CD4-positive, alpha-beta memory T cell (primary cell): ENCODE measurements at regions of chr17 and their contacts with region 1.

Region 1: GRCh38 chr17:38868817-38869525 is 887 bp upstream of the LASP1 start:
- DNase-seq: peak; percentile 85 to 91 (median 87)
- H3K4me3 ChIP-seq: peak overlapping the region; percentile 66 to 99
- H3K4me3 Mint-ChIP-seq: peak overlapping the region; percentile 93 to 100 (median 96)
- H3K27ac ChIP-seq: peak overlapping the region; percentile 88
- H3K27ac Mint-ChIP-seq: peak overlapping the region; percentile 96 to 100 (median 97)
- H3K4me1 ChIP-seq: peaks cover 45% of the 10 kb centered on the region
- H3K4me1 Mint-ChIP-seq: peaks cover 35 to 63% (median 44%) of the 10 kb centered on the region in 4 donors
- H3K27me3 ChIP-seq: no peaks in the 10 kb centered on the region
- H3K27me3 Mint-ChIP-seq: peaks cover 0 to 7% of the 10 kb centered on the region in 2 donors

Region 2: GRCh38 chr17:38711792-38712571 is 157.0 kb before region 1 on chr17:
- CTCF ChIA-PET with region 1: no interaction called
- POLR2A ChIA-PET with region 1: no interaction called
- intact Hi-C with region 1: no loop called
- DNase-seq: no peak
- H3K4me3 ChIP-seq: no peak overlapping the region
- H3K4me3 Mint-ChIP-seq: no peak overlapping the region
- H3K27ac ChIP-seq: no peak overlapping the region
- H3K27ac Mint-ChIP-seq: peak overlapping the region in 4 of 7 donors; percentile 24 to 64 (median 34)
- H3K4me1 ChIP-seq: peaks cover 37% of the 10 kb centered on the region
- H3K4me1 Mint-ChIP-seq: peaks cover 19 to 65% (median 29%) of the 10 kb centered on the region in 4 donors
- H3K27me3 ChIP-seq: no peaks in the 10 kb centered on the region
- H3K27me3 Mint-ChIP-seq: no peaks in the 10 kb centered on the region

Region 3: DNA sequence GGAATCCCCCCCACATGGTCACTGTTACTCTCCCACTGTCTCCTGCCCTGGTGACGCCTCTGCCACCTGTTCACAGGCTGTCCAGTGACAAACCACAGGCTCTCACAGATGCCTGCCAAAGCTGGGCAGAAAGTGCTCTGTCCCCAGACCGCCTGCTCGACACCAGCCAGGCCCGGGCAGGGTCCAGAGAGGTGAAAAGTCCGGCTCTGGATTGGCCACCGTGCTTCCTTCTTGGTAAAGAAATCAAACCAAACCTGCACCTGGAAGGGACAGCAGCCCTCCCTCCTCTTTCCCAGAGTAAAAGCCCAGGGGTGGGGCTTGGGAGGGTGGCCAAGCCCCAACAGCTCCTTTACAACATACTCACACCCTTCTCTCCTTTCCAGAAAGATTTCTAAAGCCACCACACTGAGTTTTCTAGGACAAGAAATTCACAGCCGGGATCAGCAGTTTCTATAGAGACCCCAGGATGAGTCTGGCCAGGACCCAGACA is 127.0 kb before region 1 on chr17:
- CTCF ChIA-PET with region 1: no interaction called
- POLR2A ChIA-PET with region 1: no interaction called
- intact Hi-C with region 1: no loop called
- DNase-seq: no peak
- H3K4me3 ChIP-seq: no peak overlapping the region
- H3K4me3 Mint-ChIP-seq: no peak overlapping the region
- H3K27ac ChIP-seq: no peak overlapping the region
- H3K27ac Mint-ChIP-seq: peak overlapping the region in 1 of 7 donors; percentile 13
- H3K4me1 ChIP-seq: peaks cover 4% of the 10 kb centered on the region
- H3K4me1 Mint-ChIP-seq: peaks cover 2 to 8% (median 5%) of the 10 kb centered on the region in 4 donors
- H3K27me3 ChIP-seq: peaks cover 9% of the 10 kb centered on the region
- H3K27me3 Mint-ChIP-seq: peaks cover 14 to 18% of the 10 kb centered on the region in 2 donors

Region 4: GRCh38 chr17:38752119-38752929 is 116.6 kb before region 1 on chr17 and contains the start of gene PSMB3:
- CTCF ChIA-PET with region 1: no interaction called
- POLR2A ChIA-PET with region 1: interaction called, 14 read pairs
- intact Hi-C with region 1: loop called (anchors 1 kb)
- DNase-seq: peak; percentile 95 to 99 (median 97)
- H3K4me3 ChIP-seq: peak within 1 kb of the TSS; percentile 81 to 94
- H3K4me3 Mint-ChIP-seq: peak within 1 kb of the TSS; percentile 95 to 100 (median 99)
- H3K27ac ChIP-seq: peak within 1 kb of the TSS; percentile 84
- H3K27ac Mint-ChIP-seq: peak within 1 kb of the TSS; percentile 93 to 100 (median 98)
- H3K4me1 ChIP-seq: peaks cover 57% of the 10 kb centered on the region
- H3K4me1 Mint-ChIP-seq: peaks cover 25 to 57% (median 43%) of the 10 kb centered on the region in 4 donors
- H3K27me3 ChIP-seq: peaks cover 24% of the 10 kb centered on the region
- H3K27me3 Mint-ChIP-seq: peaks cover 7 to 16% of the 10 kb centered on the region in 2 donors
- total RNA-seq, gene PSMB3: 93.5 to 99.0 TPM

Region 5: GRCh38 chr17:38848557-38848891 is 20.4 kb before region 1 on chr17:
- CTCF ChIA-PET with region 1: interaction called, 40 read pairs
- POLR2A ChIA-PET with region 1: interaction called, 229 read pairs
- intact Hi-C with region 1: loop called (anchors 1 kb)
- DNase-seq: no peak
- H3K4me3 ChIP-seq: no peak overlapping the region
- H3K4me3 Mint-ChIP-seq: no peak overlapping the region
- H3K27ac ChIP-seq: no peak overlapping the region
- H3K27ac Mint-ChIP-seq: no peak overlapping the region
- H3K4me1 ChIP-seq: peaks cover 27% of the 10 kb centered on the region
- H3K4me1 Mint-ChIP-seq: peaks cover 27 to 33% (median 30%) of the 10 kb centered on the region in 4 donors
- H3K27me3 ChIP-seq: no peaks in the 10 kb centered on the region
- H3K27me3 Mint-ChIP-seq: no peaks in the 10 kb centered on the region

Region 6: GRCh38 chr17:38893607-38894006 is 24.6 kb after region 1 on chr17:
- CTCF ChIA-PET with region 1: interaction called, 41 read pairs
- POLR2A ChIA-PET with region 1: interaction called, 133 read pairs
- intact Hi-C with region 1: loop called (anchors 1 kb)
- DNase-seq: peak in 1 of 5 donors; percentile 50
- H3K4me3 ChIP-seq: no peak overlapping the region
- H3K4me3 Mint-ChIP-seq: peak overlapping the region in 5 of 8 donors; percentile 12 to 59 (median 23)
- H3K27ac ChIP-seq: peak overlapping the region; percentile 50
- H3K27ac Mint-ChIP-seq: peak overlapping the region; percentile 66 to 90 (median 78)
- H3K4me1 ChIP-seq: peaks cover 95% of the 10 kb centered on the region
- H3K4me1 Mint-ChIP-seq: peaks cover 57 to 96% (median 77%) of the 10 kb centered on the region in 4 donors
- H3K27me3 ChIP-seq: no peaks in the 10 kb centered on the region
- H3K27me3 Mint-ChIP-seq: no peaks in the 10 kb centered on the region

Region 7: DNA sequence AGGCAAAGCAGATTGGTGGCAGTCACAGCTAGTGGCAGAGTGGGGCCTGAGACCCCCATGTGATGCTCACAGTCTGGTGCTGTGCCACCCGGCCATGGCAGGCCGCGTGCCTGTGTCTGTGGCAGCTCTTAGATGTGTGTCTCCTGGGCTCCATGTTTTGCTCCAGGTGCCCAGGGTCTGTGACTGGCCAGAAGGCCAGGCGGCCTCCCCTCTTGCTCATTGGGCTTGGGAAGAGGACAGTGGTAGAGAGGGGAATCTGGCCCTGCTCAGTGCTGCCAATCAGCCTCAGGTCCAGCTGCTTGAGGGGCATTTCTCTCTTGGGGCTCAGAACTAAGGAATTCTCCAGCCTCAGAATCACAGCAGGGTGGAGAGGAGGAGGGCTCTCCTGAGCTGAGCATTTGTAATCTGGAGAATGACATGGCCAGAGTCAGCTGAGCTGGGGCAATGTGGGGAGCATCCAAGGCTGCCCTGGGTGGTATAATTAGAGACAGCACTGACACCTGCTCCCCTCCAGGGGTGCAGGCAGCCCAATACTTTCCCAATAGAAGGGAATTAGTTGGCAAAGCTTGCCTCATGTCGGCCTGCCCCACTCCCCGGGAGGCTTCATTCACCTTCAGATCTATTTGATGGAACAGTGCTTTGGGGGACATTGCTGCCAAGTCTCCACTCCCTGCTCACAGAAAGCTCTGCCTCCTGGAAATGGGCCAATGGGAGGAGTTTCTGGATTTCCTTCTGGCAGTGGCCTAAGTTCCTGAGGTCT is 53.7 kb after region 1 on chr17:
- CTCF ChIA-PET with region 1: interaction called, 17 read pairs
- POLR2A ChIA-PET with region 1: interaction called, 44 read pairs
- intact Hi-C with region 1: loop called (anchors 2 kb)
- DNase-seq: no peak
- H3K4me3 ChIP-seq: no peak overlapping the region
- H3K4me3 Mint-ChIP-seq: no peak overlapping the region
- H3K27ac ChIP-seq: no peak overlapping the region
- H3K27ac Mint-ChIP-seq: peak overlapping the region in 1 of 7 donors; percentile 17
- H3K4me1 ChIP-seq: peaks cover 19% of the 10 kb centered on the region
- H3K4me1 Mint-ChIP-seq: peaks cover 24 to 32% (median 29%) of the 10 kb centered on the region in 4 donors
- H3K27me3 ChIP-seq: no peaks in the 10 kb centered on the region
- H3K27me3 Mint-ChIP-seq: no peaks in the 10 kb centered on the region

Region 8: GRCh38 chr17:39094607-39095308 is 225.8 kb after region 1 on chr17:
- CTCF ChIA-PET with region 1: no interaction called
- POLR2A ChIA-PET with region 1: interaction called, 11 read pairs
- intact Hi-C with region 1: no loop called
- DNase-seq: peak; percentile 32 to 74 (median 69)
- H3K4me3 ChIP-seq: peak overlapping the region in 1 of 2 donors; percentile 29
- H3K4me3 Mint-ChIP-seq: peak overlapping the region; percentile 72 to 91 (median 84)
- H3K27ac ChIP-seq: peak overlapping the region; percentile 42
- H3K27ac Mint-ChIP-seq: peak overlapping the region; percentile 82 to 98 (median 96)
- H3K4me1 ChIP-seq: peaks cover 89% of the 10 kb centered on the region
- H3K4me1 Mint-ChIP-seq: peaks cover 65 to 87% (median 75%) of the 10 kb centered on the region in 4 donors
- H3K27me3 ChIP-seq: no peaks in the 10 kb centered on the region
- H3K27me3 Mint-ChIP-seq: no peaks in the 10 kb centered on the region